Caco-2 (cell line): ENCODE measurements at regions of chr13 and their contacts with region 1.

Region 1: DNA sequence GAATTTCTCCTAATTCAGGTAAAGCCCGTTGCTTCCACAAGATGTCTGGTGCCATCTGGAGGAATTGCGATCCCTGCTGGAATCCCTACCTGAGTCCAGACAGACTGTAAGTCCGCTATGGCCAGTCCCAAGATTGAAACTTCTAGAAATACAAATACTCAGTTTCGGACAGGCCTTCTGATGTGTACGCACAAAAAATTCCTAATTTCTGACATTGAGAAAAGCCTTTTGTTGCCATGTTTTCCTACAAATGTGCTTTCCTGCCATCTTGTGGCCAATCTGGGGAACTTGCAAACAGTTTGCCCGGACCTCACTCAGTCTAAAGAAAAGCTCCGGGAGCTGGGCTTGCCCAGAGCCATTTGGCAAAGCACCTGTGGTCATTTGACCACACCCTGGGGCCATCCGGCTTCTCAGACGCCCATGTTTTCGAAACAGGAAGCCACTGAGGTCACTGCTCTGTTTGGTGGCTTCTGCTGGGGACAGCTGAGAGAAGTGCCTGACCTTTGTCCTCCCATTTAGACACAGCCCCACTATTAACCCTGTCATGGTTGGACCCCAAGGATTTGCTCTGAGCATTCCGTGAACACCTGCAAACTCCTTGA is 79.4 kb downstream of the SLC15A1 start:
- DNase-seq: peak; percentile 87 to 91
- H3K4me3 ChIP-seq: no peak overlapping the region
- H3K4me3 Mint-ChIP-seq: peak overlapping the region; percentile 14
- H3K27ac Mint-ChIP-seq: peak overlapping the region; percentile 23
- H3K4me1 ChIP-seq: peaks cover 17% of the 10 kb centered on the region
- H3K4me1 Mint-ChIP-seq: peaks cover 8% of the 10 kb centered on the region
- H3K27me3 ChIP-seq: no peaks in the 10 kb centered on the region
- H3K27me3 Mint-ChIP-seq: no peaks in the 10 kb centered on the region
- CTCF ChIP-seq: peak; percentile 88

Region 2: GRCh38 chr13:98445340-98446233 is 227.5 kb before region 1 on chr13:
- CTCF ChIA-PET with region 1: interaction called, 17 read pairs
- POLR2A ChIA-PET with region 1: no interaction called
- intact Hi-C with region 1: loop called (anchors 1 kb)
- DNase-seq: peak; percentile 77 to 88
- H3K4me3 ChIP-seq: no peak overlapping the region
- H3K4me3 Mint-ChIP-seq: no peak overlapping the region
- H3K27ac Mint-ChIP-seq: peak overlapping the region; percentile 77
- H3K4me1 ChIP-seq: no peaks in the 10 kb centered on the region
- H3K4me1 Mint-ChIP-seq: peaks cover 14% of the 10 kb centered on the region
- H3K27me3 ChIP-seq: no peaks in the 10 kb centered on the region
- H3K27me3 Mint-ChIP-seq: no peaks in the 10 kb centered on the region
- CTCF ChIP-seq: peak; percentile 97 to 99

Region 3: GRCh38 chr13:98563069-98563468 is 110.0 kb before region 1 on chr13:
- CTCF ChIA-PET with region 1: no interaction called
- POLR2A ChIA-PET with region 1: no interaction called
- intact Hi-C with region 1: no loop called
- DNase-seq: no peak
- H3K4me3 ChIP-seq: no peak overlapping the region
- H3K4me3 Mint-ChIP-seq: no peak overlapping the region
- H3K27ac Mint-ChIP-seq: no peak overlapping the region
- H3K4me1 ChIP-seq: peaks cover 34% of the 10 kb centered on the region
- H3K4me1 Mint-ChIP-seq: peaks cover 58% of the 10 kb centered on the region
- H3K27me3 ChIP-seq: no peaks in the 10 kb centered on the region
- H3K27me3 Mint-ChIP-seq: no peaks in the 10 kb centered on the region
- CTCF ChIP-seq: no peak

Region 4: GRCh38 chr13:98957731-98958442 is 284.8 kb after region 1 on chr13:
- CTCF ChIA-PET with region 1: no interaction called
- POLR2A ChIA-PET with region 1: no interaction called
- intact Hi-C with region 1: no loop called
- DNase-seq: no peak
- H3K4me3 ChIP-seq: no peak overlapping the region
- H3K4me3 Mint-ChIP-seq: no peak overlapping the region
- H3K27ac Mint-ChIP-seq: no peak overlapping the region
- H3K4me1 ChIP-seq: peaks cover 48% of the 10 kb centered on the region
- H3K4me1 Mint-ChIP-seq: peaks cover 31% of the 10 kb centered on the region
- H3K27me3 ChIP-seq: no peaks in the 10 kb centered on the region
- H3K27me3 Mint-ChIP-seq: no peaks in the 10 kb centered on the region
- CTCF ChIP-seq: no peak